HEK293 (cell line): ENCODE measurements at regions of chr20 and their contacts with region 1.

Region 1: DNA sequence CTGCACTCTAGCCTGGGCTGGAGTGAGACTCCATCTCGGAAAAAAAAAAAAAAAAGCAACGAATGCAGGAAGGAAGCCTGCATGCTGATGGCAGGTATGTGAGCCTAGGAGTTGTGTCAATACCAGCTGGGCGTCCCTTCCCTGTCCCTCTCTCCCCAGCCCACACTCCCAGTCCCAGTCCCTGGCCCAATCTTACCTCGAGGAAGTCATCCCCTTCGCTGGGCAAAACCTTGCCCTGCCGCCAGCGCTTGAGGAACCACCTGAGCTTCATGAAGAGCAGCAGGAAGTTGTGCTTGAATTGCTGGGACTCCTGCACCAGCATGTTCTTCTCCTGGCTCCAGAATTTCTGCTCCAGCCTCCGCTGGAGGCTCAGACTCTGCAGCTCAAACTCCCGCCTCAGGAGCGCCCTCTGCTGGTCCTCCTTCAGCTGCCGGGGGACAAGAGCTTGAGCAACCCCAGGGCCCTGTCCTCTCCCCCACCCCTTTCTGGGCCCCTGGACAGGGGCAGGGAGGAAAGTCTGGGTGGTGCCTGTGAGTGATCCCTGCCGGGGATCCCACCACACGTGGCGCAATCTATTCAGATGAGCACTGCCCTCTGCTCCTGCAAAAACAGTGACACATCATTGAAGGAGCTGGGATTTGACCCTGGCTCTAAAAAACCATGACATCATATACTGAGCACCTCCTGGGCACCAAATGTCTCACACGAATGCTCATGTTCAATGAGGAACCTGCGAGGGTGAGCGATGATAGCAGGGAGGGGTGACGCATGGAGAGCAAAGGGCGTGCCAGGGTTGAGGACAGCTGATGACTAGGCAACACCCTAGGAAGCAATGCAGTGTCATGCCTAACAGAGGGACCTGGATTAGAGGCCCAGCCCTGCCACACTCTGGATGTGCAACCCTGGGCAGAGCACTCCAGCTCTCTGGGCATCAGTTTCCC is 35.0 kb upstream of the DSN1 start:
- H3K4me3 ChIP-seq: no peak overlapping the region
- H3K27ac ChIP-seq: no peak overlapping the region
- H3K4me1 ChIP-seq: no peaks in the 10 kb centered on the region
- CTCF ChIP-seq: peak; percentile 70

Region 2: DNA sequence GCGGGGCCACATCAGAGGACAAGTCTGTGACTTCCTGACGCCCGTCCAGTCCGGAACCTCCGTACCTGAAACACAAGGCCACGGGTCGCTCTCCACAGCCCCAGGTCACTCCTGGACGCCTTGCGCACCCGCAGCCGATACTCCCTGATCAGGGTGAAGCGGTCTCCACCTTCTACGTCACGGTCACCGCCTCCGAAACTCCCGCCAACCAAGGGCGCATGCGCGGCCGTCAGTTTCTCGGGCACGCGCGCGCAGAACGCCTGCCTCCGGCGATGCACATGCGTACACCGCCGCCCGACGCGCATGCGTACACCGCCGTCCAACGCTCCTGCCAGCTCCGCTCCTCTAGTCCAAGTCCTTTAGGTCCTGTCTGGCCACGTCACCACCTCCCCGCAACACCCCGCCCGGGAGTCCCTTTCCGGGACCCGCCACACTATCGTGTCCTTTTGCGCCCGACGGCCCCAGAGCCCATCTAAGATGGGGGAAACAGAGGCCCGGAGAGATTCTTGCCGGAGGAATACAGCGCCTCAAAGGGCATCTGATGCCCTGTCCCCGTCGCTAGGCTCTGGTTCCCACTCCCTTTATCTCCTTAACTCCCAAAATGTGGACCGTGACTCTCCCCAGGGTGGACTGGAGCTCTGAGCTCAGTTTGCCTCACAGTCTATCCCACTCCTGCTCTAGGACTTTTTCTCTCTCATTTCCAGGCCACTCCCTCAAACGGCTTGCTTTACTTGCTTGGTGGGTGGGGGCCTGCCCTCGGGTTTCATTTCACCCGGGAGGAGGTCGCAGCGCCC is 34.8 kb before region 1 on chr20 and contains the start of gene DSN1:
- CTCF ChIA-PET with region 1: interaction called, 13 read pairs
- POLR2A ChIA-PET with region 1: no interaction called
- H3K4me3 ChIP-seq: peak within 1 kb of the TSS; percentile 81
- H3K27ac ChIP-seq: peak within 1 kb of the TSS; percentile 77
- H3K4me1 ChIP-seq: peaks cover 4% of the 10 kb centered on the region; the same call in 1 of the 2 replicates
- CTCF ChIP-seq: no peak; the same call in 1 of the 2 replicates

Region 3: DNA sequence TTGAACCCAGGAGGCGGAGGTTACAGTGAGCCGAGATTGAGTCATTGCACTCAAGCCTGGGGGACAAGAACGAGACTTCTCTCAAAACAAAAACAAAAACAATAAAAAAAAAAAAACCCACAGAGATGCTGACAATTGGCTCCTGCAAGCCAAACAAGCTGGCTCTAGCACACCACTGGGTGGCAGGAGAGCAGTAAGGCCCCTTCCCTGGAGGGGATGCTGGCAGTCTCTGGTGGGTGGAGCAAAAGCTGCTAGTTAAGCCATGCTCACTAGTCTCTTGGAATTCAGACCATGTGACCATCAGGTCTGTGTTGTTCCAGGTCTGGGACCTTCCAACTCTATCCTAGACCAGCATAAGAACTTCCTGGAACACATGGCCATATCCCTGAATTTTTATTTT is 16.2 kb before region 1 on chr20:
- CTCF ChIA-PET with region 1: interaction called, 13 read pairs
- POLR2A ChIA-PET with region 1: no interaction called
- H3K4me3 ChIP-seq: no peak overlapping the region
- H3K27ac ChIP-seq: no peak overlapping the region
- H3K4me1 ChIP-seq: no peaks in the 10 kb centered on the region
- CTCF ChIP-seq: peak; percentile 49

Region 4: GRCh38 chr20:36835453-36836198 is 27.0 kb after region 1 on chr20:
- CTCF ChIA-PET with region 1: interaction called, 10 read pairs
- POLR2A ChIA-PET with region 1: no interaction called
- H3K4me3 ChIP-seq: no peak overlapping the region; the same call in 1 of the 2 replicates
- H3K27ac ChIP-seq: peak overlapping the region; percentile 11; the same call in 1 of the 2 replicates
- H3K4me1 ChIP-seq: no peaks in the 10 kb centered on the region
- CTCF ChIP-seq: no peak

Region 5: GRCh38 chr20:36919715-36920333 is 111.2 kb after region 1 on chr20:
- CTCF ChIA-PET with region 1: interaction called, 11 read pairs
- POLR2A ChIA-PET with region 1: no interaction called
- H3K4me3 ChIP-seq: no peak overlapping the region
- H3K27ac ChIP-seq: no peak overlapping the region
- H3K4me1 ChIP-seq: no peaks in the 10 kb centered on the region
- CTCF ChIP-seq: peak; percentile 59; the same call in 1 of the 2 replicates